CD4-positive, alpha-beta memory T cell (primary cell): ENCODE measurements at regions of chrX and their contacts with region 1.

Region 1: GRCh38 chrX:22135994-22136684 is 104.0 kb downstream of the PHEX start:
- DNase-seq: peak in 4 of 5 donors; percentile 40 to 51 (median 43)
- H3K4me3 ChIP-seq: no peak overlapping the region
- H3K4me3 Mint-ChIP-seq: peak overlapping the region in 7 of 8 donors; percentile 32 to 71 (median 57)
- H3K27ac ChIP-seq: no peak overlapping the region
- H3K27ac Mint-ChIP-seq: no peak overlapping the region
- H3K4me1 ChIP-seq: no peaks in the 10 kb centered on the region
- H3K4me1 Mint-ChIP-seq: peaks cover 4 to 13% (median 7%) of the 10 kb centered on the region in 4 donors
- H3K27me3 ChIP-seq: no peaks in the 10 kb centered on the region
- H3K27me3 Mint-ChIP-seq: no peaks in the 10 kb centered on the region

Region 2: GRCh38 chrX:22192417-22193060 is 56.4 kb after region 1 on chrX:
- CTCF ChIA-PET with region 1: interaction called, 3 read pairs
- POLR2A ChIA-PET with region 1: no interaction called
- intact Hi-C with region 1: loop called (anchors 1 kb)
- DNase-seq: peak in 4 of 5 donors; percentile 28 to 46 (median 40)
- H3K4me3 ChIP-seq: no peak overlapping the region
- H3K4me3 Mint-ChIP-seq: peak overlapping the region in 2 of 8 donors; percentile 51 to 53
- H3K27ac ChIP-seq: no peak overlapping the region
- H3K27ac Mint-ChIP-seq: no peak overlapping the region
- H3K4me1 ChIP-seq: no peaks in the 10 kb centered on the region
- H3K4me1 Mint-ChIP-seq: peaks cover 0 to 4% (median 3%) of the 10 kb centered on the region in 4 donors
- H3K27me3 ChIP-seq: no peaks in the 10 kb centered on the region
- H3K27me3 Mint-ChIP-seq: peaks cover 0 to 1% of the 10 kb centered on the region in 2 donors

Region 3: DNA sequence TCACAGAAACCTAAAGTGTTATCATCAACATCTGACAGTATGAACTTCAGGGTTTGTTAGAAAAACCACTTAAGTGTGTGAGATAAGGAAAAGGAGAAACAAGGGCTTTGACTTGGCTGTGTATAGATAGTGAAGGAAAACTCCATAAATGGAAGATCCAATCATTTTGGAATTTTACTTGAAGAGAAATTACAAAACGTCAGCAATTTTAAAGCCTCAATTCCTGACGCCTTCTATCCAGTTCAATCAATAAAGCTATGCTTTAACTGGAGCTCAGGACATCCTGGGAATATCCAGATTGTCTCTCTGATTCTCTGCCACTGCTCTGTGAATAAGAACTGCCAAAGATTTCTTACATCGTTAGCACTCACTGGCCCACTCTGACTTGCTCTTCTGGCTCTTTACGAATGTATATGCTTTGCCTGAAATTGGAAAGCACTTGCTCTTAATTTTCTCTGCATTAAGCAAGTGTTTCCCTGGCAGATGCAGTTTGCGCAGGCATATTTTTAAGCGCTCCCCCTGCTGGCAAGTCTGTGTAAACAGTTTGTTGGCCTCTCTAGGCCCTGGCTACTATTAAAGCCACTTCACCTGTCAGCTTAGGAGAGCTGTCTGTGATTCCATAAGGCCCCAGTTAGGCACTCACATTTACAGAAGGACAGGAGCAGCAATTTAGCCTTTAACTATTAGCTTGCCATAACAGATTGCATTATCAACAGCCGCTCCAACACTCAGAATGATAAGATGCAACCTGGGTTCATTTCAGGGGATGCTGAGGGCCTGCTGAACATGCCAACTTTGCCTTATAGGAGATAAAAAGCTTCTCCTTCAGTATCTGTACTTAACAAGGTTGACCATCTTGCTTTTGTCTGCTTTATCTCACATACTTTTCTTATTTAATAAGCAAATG is 612.2 kb after region 1 on chrX:
- CTCF ChIA-PET with region 1: interaction called, 13 read pairs
- POLR2A ChIA-PET with region 1: no interaction called
- intact Hi-C with region 1: no loop called
- DNase-seq: peak in 4 of 5 donors; percentile 17 to 41 (median 31)
- H3K4me3 ChIP-seq: no peak overlapping the region
- H3K4me3 Mint-ChIP-seq: no peak overlapping the region
- H3K27ac ChIP-seq: no peak overlapping the region
- H3K27ac Mint-ChIP-seq: no peak overlapping the region
- H3K4me1 ChIP-seq: no peaks in the 10 kb centered on the region
- H3K4me1 Mint-ChIP-seq: no peaks in the 10 kb centered on the region
- H3K27me3 ChIP-seq: no peaks in the 10 kb centered on the region
- H3K27me3 Mint-ChIP-seq: peaks cover 0 to 3% of the 10 kb centered on the region in 2 donors